PC-9 (cell line): ENCODE measurements at regions of chr7 and their contacts with region 1.

Region 1: DNA sequence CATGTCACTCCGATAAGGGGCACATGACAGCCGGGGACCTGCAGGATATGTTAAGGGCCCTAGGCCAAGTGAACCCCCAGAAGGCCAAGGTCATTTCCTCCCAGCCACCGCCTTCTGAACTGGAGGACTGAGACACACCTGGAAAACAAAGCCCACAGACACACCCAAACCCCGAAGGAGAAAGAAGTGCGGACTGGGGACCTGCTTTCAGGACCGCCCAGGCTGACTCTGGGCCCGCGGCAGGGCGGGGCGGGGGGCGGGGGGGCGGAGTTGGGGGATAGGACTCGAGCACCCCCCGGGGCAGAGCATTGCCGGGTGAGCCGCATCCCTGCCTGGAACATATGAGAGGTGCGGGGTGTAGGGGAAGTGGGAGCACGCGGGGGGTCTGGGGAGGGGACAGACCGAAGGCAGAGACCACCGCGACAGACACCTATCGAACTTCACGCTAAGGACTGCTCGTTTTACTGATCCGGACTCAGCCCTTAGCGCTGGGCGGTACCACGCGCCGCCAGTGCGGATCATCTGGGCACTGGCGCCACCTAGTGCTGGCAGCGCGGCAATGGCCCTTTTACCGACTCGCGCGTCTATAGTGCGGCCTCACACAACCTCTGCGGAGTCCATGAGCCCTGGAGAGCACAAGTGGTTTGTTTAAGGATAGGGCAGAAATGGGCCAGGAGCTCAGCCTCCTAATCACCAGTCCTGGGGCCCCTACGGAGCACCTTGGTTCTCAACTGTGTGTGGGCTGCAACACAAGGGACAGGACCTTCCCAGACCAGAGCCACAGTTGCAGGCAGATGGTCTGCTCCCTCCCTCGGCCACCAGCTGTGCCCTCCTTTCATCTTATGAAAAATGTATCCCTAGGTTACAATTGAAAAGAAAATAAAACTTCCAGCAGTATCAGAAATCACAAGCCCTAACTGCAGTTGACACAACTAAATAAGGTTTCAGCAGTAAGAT is 157.6 kb downstream of the HERPUD2 start:
- DNase-seq: peak; percentile 56 to 73
- H3K4me3 ChIP-seq: peak overlapping the region; percentile 55
- H3K27ac ChIP-seq: no peak overlapping the region
- H3K4me1 ChIP-seq: 0 out of 2 replicates have a peak, but pooled peaks cover 9% of the 10 kb centered on the region
- H3K27me3 ChIP-seq: 0 out of 2 replicates have a peak, but pooled peaks cover 18% of the 10 kb centered on the region
- CTCF ChIP-seq: peak; percentile 100

Region 2: DNA sequence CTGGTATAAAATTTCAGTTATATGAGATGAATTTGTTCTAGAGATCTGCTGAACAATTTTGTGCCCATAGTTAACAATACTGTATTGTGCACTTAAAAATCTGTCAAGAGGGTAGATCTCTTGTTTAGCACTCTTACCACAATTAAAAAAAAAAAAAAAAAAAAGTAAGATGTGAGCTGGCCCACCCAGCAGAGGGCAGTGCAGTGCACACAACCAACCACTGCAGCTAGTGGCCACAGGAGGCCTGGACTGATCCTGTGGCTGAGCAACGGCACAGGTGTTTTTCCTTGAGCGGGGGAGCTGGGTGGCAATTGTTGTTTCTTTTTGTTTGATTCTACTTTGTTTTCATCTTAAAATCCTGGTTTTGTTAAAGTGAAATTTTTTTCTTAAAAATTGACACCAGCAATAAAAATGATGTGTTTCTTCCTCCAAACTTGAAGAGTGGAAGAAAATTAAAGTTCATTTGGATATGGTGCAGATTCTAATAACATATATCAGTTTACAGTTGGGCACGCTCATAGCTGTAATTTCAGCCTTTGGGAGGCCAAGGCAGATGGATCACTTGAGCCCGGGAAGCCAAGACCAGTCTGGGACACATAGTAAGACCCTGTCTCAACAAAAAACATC is 112.4 kb before region 1 on chr7:
- CTCF ChIA-PET with region 1: no interaction called
- POLR2A ChIA-PET with region 1: no interaction called
- intact Hi-C with region 1: loop called (anchors 2 kb)
- DNase-seq: peak; percentile 59 to 63
- H3K4me3 ChIP-seq: no peak overlapping the region
- H3K27ac ChIP-seq: no peak overlapping the region
- H3K4me1 ChIP-seq: no peaks in the 10 kb centered on the region
- H3K27me3 ChIP-seq: no peaks in the 10 kb centered on the region
- CTCF ChIP-seq: peak; percentile 94

Region 3: DNA sequence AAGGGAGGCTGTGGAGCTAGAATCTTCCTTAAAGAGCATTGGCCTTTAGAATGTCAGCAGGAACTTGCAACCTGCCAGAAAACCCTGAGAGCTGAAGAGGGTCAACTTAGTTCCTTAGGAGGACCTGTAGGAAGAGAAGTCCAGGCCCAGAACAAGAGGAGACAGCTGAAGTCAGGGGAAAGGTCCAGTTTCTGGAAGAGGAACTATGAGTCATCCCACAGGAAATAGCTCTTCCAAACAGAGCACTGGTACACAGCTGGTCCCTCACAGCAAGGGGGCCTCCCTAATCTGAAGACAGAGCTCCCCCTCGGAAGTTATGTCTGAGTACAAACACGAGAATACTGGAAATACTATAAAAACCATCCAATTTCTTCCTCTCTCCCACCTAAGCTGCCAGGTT is 58.7 kb after region 1 on chr7:
- CTCF ChIA-PET with region 1: no interaction called
- POLR2A ChIA-PET with region 1: no interaction called
- intact Hi-C with region 1: no loop called
- DNase-seq: no peak
- H3K4me3 ChIP-seq: no peak overlapping the region
- H3K27ac ChIP-seq: no peak overlapping the region
- H3K4me1 ChIP-seq: no peaks in the 10 kb centered on the region
- H3K27me3 ChIP-seq: no peaks in the 10 kb centered on the region
- CTCF ChIP-seq: no peak

Region 4: GRCh38 chr7:35624299-35625186 is 87.2 kb after region 1 on chr7:
- CTCF ChIA-PET with region 1: interaction called, 5 read pairs
- POLR2A ChIA-PET with region 1: no interaction called
- intact Hi-C with region 1: loop called (anchors 5 kb)
- DNase-seq: peak in 1 of 2 experiments; percentile 32
- H3K4me3 ChIP-seq: no peak overlapping the region
- H3K27ac ChIP-seq: no peak overlapping the region
- H3K4me1 ChIP-seq: no peaks in the 10 kb centered on the region
- H3K27me3 ChIP-seq: no peaks in the 10 kb centered on the region
- CTCF ChIP-seq: peak; percentile 93